Breast epithelium (tissue), 4 donors: ENCODE measurements at regions of chr13 and their contacts with region 1.

Region 1: DNA sequence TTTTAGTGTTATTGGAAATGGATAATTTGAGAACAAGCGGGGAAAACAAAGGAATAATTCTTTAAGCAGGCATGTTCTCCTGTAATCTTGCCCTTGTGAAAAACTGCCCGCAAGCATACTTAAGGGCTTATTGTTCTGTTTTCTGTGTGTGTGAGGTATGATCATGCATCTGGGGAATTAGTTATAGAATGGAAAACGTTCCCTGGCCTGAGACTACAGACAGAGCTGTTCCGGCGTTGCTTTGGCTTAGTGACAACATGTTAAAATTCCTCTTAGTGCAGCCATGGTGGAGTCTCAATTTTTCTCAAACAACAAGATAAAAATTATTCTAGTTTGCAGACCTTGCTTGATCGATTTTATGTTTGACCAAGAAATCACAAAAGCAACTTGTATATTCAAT is 560.2 kb upstream of the SPRY2 start:
- DNase-seq: no peak
- H3K4me3 ChIP-seq: no peak overlapping the region
- H3K27ac ChIP-seq: peak overlapping the region in 1 of 2 donors; percentile 53
- H3K4me1 ChIP-seq: no peaks in the 10 kb centered on the region
- H3K27me3 ChIP-seq: no peaks in the 10 kb centered on the region
- CTCF ChIP-seq: no peak
- POLR2A ChIP-seq: no peak

Region 2: GRCh38 chr13:80865329-80865728 is 35.8 kb before region 1 on chr13:
- intact Hi-C with region 1: loop called (anchors 2 kb)
- DNase-seq: no peak
- H3K4me3 ChIP-seq: no peak overlapping the region
- H3K27ac ChIP-seq: no peak overlapping the region
- H3K4me1 ChIP-seq: no peaks in the 10 kb centered on the region
- H3K27me3 ChIP-seq: no peaks in the 10 kb centered on the region
- CTCF ChIP-seq: no peak
- POLR2A ChIP-seq: no peak

Region 3: GRCh38 chr13:80881942-80882445 is 19.1 kb before region 1 on chr13:
- intact Hi-C with region 1: no loop called
- DNase-seq: no peak
- H3K4me3 ChIP-seq: no peak overlapping the region
- H3K27ac ChIP-seq: no peak overlapping the region
- H3K4me1 ChIP-seq: no peaks in the 10 kb centered on the region
- H3K27me3 ChIP-seq: no peaks in the 10 kb centered on the region
- CTCF ChIP-seq: no peak
- POLR2A ChIP-seq: no peak

Region 4: DNA sequence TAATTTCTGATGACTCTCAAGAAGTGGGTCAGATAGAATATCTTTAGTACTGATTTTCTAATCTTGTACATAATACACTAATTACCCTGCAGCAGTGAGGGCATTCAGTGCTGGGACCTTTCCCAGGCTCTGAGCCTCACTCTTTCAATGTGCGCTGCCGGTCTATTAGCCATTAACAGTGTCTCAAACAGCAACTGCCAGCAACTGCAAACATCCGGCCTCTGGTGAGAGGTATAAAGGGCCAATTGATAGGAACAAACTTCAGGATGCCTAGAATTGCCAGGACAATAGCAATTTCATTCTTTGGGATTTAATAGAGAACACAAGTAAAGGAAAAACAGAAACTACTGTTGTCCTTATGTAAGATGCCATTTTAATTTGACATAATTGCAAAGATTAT is 44.2 kb after region 1 on chr13:
- intact Hi-C with region 1: no loop called
- DNase-seq: no peak
- H3K4me3 ChIP-seq: no peak overlapping the region
- H3K27ac ChIP-seq: no peak overlapping the region
- H3K4me1 ChIP-seq: no peaks in the 10 kb centered on the region
- H3K27me3 ChIP-seq: no peaks in the 10 kb centered on the region
- CTCF ChIP-seq: no peak
- POLR2A ChIP-seq: no peak